A673 (cell line): ENCODE measurements at regions of chr15 and their contacts with region 1.

Region 1: GRCh38 chr15:68304589-68305337 is 27.2 kb downstream of the FEM1B start:
- DNase-seq: no peak
- H3K4me3 ChIP-seq: no peak overlapping the region
- H3K27ac ChIP-seq: no peak overlapping the region
- H3K4me1 ChIP-seq: no peaks in the 10 kb centered on the region
- H3K27me3 ChIP-seq: no peaks in the 10 kb centered on the region
- CTCF ChIP-seq: no peak

Region 2: GRCh38 chr15:68252925-68253534 is 51.7 kb before region 1 on chr15:
- CTCF ChIA-PET with region 1: interaction called, 30 read pairs
- POLR2A ChIA-PET with region 1: no interaction called
- intact Hi-C with region 1: loop called (anchors 2 kb)
- DNase-seq: peak; percentile 86
- H3K4me3 ChIP-seq: no peak overlapping the region
- H3K27ac ChIP-seq: no peak overlapping the region
- H3K4me1 ChIP-seq: peaks cover 4% of the 10 kb centered on the region
- H3K27me3 ChIP-seq: no peaks in the 10 kb centered on the region
- CTCF ChIP-seq: peak; percentile 82

Region 3: DNA sequence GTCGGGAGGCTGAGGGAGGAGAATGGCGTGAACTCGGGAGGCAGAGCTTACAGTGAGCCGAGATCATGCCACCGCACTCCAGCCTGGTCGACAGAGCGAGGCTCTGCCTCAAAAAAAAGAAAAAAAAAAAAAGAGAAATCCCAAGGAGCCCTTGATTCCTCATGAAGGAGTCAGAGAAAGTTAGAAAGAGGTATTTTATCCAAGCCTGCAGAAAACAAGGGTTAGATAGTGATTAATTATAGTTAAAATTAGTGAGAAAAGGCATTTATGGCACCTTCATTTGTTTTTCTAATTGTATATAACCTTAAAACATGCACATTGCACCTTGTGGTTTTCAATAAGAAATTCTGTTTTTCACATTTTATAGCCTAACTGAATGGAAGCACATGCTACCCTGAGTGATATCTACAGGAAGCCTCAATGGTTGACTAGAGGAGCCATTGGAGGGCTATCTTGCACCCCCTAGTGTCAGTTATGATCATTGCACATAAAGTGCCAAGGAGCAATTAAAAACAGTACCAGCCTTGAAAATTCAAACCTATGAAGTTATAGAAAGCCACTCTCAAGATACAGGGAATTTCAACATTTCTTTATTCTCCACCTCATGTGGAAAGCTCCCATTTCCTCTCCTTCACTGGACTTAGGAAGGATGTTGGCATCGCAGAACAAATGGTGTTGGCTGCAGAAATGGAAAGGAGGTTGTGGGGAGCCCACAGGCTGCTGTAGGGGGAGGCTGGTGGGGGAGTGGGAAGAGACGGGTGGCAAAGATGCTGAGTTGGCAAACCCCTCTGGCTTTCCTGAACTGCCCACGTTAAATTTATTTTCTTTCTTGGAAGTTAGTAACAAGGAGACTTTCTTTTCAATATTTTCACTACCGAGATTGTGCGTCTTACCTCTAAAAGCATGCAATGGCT is 78.7 kb after region 1 on chr15:
- CTCF ChIA-PET with region 1: interaction called, 5 read pairs
- POLR2A ChIA-PET with region 1: no interaction called
- intact Hi-C with region 1: loop called (anchors 1 kb)
- DNase-seq: peak; percentile 63
- H3K4me3 ChIP-seq: no peak overlapping the region
- H3K27ac ChIP-seq: no peak overlapping the region
- H3K4me1 ChIP-seq: no peaks in the 10 kb centered on the region
- H3K27me3 ChIP-seq: no peaks in the 10 kb centered on the region
- CTCF ChIP-seq: peak; percentile 71

Region 4: GRCh38 chr15:68418611-68419161 is 113.9 kb after region 1 on chr15:
- CTCF ChIA-PET with region 1: no interaction called
- POLR2A ChIA-PET with region 1: no interaction called
- intact Hi-C with region 1: no loop called
- DNase-seq: no peak
- H3K4me3 ChIP-seq: no peak overlapping the region
- H3K27ac ChIP-seq: no peak overlapping the region
- H3K4me1 ChIP-seq: no peaks in the 10 kb centered on the region
- H3K27me3 ChIP-seq: no peaks in the 10 kb centered on the region
- CTCF ChIP-seq: no peak

Region 5: DNA sequence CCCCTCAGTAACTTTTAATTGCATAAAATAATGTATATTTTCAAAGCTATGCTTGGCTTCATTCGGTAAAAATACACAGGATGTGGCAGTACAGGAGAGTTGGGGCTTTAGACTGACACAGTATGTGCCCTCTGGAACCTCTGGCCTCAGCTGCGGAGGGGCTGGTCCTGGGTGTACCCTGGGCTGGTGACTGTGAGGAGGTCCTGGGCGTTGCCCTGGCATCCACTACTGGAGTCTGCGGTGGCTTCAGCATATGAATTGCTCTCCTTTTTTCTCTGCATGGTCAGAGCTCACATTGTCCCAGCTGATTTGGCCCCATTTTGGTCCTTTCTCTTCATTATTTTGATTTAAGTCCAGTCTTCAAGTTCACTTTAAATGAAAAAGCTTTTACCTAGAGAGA is 233.5 kb after region 1 on chr15:
- CTCF ChIA-PET with region 1: interaction called, 12 read pairs
- POLR2A ChIA-PET with region 1: no interaction called
- intact Hi-C with region 1: no loop called
- DNase-seq: no peak
- H3K4me3 ChIP-seq: no peak overlapping the region
- H3K27ac ChIP-seq: no peak overlapping the region
- H3K4me1 ChIP-seq: no peaks in the 10 kb centered on the region
- H3K27me3 ChIP-seq: no peaks in the 10 kb centered on the region
- CTCF ChIP-seq: no peak

Region 6: DNA sequence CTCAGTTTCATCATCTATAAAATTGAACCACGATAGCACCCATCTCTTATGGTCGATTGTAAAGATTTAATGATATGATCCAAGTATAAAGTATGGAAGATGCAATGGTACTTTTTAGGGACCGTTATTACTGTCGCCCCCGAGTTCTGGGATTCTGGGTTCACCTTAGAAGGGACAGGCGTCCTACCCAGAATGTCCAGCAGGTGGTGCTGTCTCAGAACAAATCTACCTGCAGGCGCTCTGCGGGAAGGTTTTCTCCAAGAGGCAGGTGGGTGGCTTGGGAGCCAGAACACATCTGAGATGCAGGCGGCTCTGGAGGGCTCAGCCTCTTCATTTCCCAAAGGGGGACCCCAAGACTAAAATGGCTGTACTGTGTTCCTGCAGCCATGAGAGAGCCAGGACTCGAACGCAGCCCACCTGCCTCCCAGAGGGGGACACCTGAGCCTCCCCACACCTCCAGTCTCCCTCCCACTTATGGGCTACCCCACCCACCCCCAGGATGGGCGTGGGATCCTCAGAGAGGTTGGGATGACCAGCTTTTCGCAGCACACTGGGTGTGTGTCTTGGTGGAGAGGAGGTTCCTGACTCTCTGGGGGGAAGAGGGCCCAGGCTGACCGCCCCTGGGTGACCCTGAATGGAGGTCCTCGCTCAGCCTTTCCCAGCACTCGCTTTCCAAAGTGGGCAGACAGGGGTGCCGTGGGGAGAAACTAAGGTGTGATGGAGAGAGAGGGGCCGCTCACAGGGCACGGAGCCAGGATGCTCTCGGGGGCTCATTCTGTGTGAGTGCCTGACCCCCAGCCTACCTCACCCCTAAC is 245.9 kb after region 1 on chr15:
- CTCF ChIA-PET with region 1: interaction called, 5 read pairs
- POLR2A ChIA-PET with region 1: no interaction called
- intact Hi-C with region 1: loop called (anchors 5 kb)
- DNase-seq: peak; percentile 62
- H3K4me3 ChIP-seq: no peak overlapping the region
- H3K27ac ChIP-seq: no peak overlapping the region
- H3K4me1 ChIP-seq: no peaks in the 10 kb centered on the region
- H3K27me3 ChIP-seq: peaks cover 4% of the 10 kb centered on the region
- CTCF ChIP-seq: peak; percentile 95

Region 7: GRCh38 chr15:68924866-68925560 is 620.2 kb after region 1 on chr15:
- CTCF ChIA-PET with region 1: interaction called, 5 read pairs
- POLR2A ChIA-PET with region 1: no interaction called
- intact Hi-C with region 1: loop called (anchors 10 kb)
- DNase-seq: peak; percentile 90
- H3K4me3 ChIP-seq: no peak overlapping the region
- H3K27ac ChIP-seq: no peak overlapping the region
- H3K4me1 ChIP-seq: no peaks in the 10 kb centered on the region
- H3K27me3 ChIP-seq: no peaks in the 10 kb centered on the region
- CTCF ChIP-seq: peak; percentile 97